Motor neuron (in vitro differentiated cells): ENCODE measurements at regions of chr1 and their contacts with region 1.

Region 1: DNA sequence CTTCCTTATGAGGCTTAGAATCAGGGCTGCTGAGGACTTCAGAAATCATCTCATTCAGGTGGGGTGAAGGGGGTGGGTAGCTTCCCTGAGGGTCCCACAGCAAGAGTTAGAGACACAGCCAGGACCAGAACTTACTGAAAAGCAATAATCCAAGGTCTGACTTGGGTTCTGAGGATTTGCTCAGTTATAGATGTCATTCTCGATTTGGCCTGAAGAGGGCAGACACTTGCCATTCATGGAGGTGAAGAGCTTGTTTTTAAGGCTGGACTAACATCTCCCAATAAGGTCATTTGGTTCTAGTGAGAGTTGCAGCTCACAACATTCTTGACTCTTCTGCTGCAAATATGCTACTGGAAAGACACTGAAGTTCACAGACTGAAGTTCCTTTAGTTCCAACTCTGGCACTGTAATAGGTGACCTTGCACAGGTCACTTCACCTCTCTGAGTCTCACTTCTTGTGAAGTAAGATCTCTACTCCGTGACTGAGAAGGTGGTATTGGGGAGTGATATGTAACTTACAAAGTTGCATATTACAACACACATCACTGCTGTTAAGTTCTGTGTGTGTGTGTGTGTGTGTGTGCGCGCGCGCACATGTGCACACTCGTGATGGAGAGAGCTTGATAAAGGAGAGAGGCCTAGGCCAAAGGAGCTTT is 69.8 kb upstream of the DIRAS3 start:
- ATAC-seq: peak; percentile 74 to 86 (median 78)
- H3K4me3 ChIP-seq: no peak overlapping the region
- H3K27ac ChIP-seq: no peak overlapping the region
- H3K4me1 ChIP-seq: no peaks in the 10 kb centered on the region

Region 2: GRCh38 chr1:66412704-66413103 is 1707.6 kb before region 1 on chr1:
- in situ Hi-C with region 1: no loop called
- ATAC-seq: peak in 1 of 8 experiments; percentile 21
- H3K4me3 ChIP-seq: no peak overlapping the region
- H3K27ac ChIP-seq: no peak overlapping the region
- H3K4me1 ChIP-seq: no peaks in the 10 kb centered on the region

Region 3: GRCh38 chr1:67760030-67760821 is 360.0 kb before region 1 on chr1:
- in situ Hi-C with region 1: loop called in 1 of 9 experiments (anchors 25 kb)
- ATAC-seq: peak; percentile 77 to 96 (median 88)
- H3K4me3 ChIP-seq: no peak overlapping the region
- H3K27ac ChIP-seq: no peak overlapping the region
- H3K4me1 ChIP-seq: peaks cover 11 to 14% of the 10 kb centered on the region in 2 donors

Region 4: GRCh38 chr1:67853704-67854103 is 266.6 kb before region 1 on chr1:
- in situ Hi-C with region 1: loop called in 6 of 9 experiments (anchors 10 to 25 kb)
- ATAC-seq: peak; percentile 74 to 96 (median 82)
- H3K4me3 ChIP-seq: no peak overlapping the region
- H3K27ac ChIP-seq: no peak overlapping the region
- H3K4me1 ChIP-seq: peaks cover 25 to 26% of the 10 kb centered on the region in 2 donors

Region 5: DNA sequence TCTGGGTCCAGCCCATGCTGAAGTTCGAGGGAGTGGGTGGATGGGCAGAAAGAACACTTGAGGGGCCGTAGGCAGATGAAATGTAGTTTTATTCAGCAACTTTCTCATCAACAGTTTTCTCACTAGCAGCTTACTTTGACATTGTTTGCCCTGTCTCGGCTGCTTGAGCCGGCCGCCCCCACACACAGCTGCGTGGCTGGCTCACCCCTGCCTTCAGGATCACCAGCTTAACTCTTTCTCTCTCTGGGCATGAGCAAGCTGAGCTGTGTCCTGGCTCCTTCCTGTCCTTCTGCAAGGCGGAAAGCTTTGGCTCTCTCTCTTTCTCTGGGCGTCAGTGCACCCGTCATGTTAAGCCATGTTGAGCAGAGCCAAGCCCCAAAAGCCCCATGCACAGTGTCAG is 182.6 kb before region 1 on chr1:
- in situ Hi-C with region 1: no loop called
- ATAC-seq: no peak
- H3K4me3 ChIP-seq: no peak overlapping the region
- H3K27ac ChIP-seq: no peak overlapping the region
- H3K4me1 ChIP-seq: peaks cover 8 to 17% of the 10 kb centered on the region in 2 donors

Region 6: DNA sequence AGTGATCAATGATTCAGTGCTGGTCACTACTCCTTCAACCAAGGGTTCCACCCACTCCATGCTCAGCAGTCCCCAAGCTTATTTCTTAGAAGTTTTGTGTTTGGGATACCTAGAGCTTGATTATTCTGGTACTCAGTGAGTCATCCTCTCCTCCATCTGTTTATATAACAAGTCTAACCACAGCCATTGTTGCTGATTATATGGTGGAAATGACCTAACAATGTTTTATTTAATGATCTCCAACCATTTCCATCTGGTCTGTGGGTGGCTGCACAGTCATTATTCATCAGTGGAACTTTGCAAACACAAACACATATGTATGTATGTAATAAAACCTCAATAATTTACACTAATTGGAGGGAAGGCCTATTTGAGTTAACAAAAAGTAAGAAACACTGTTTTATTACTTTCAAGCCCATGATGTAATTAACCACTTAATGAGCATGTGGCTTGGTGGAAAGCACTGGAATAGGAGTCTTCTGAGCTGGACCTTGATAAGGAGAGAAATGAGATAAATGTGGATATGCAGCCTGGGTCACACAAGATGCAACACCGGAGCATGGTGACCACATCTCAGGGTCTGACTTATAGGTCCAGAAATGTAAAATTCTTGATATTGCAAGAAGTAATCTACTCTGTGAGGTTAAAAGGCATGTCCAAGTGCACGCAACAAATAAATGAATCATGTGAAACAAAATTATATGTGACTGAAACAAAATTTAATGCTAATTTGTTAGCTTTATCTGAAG is 211.0 kb after region 1 on chr1:
- in situ Hi-C with region 1: loop called in 6 of 9 experiments (anchors 10 to 25 kb)
- ATAC-seq: peak in 7 of 8 experiments; percentile 36 to 97 (median 57)
- H3K4me3 ChIP-seq: no peak overlapping the region
- H3K27ac ChIP-seq: no peak overlapping the region
- H3K4me1 ChIP-seq: no peaks in the 10 kb centered on the region

Region 7: DNA sequence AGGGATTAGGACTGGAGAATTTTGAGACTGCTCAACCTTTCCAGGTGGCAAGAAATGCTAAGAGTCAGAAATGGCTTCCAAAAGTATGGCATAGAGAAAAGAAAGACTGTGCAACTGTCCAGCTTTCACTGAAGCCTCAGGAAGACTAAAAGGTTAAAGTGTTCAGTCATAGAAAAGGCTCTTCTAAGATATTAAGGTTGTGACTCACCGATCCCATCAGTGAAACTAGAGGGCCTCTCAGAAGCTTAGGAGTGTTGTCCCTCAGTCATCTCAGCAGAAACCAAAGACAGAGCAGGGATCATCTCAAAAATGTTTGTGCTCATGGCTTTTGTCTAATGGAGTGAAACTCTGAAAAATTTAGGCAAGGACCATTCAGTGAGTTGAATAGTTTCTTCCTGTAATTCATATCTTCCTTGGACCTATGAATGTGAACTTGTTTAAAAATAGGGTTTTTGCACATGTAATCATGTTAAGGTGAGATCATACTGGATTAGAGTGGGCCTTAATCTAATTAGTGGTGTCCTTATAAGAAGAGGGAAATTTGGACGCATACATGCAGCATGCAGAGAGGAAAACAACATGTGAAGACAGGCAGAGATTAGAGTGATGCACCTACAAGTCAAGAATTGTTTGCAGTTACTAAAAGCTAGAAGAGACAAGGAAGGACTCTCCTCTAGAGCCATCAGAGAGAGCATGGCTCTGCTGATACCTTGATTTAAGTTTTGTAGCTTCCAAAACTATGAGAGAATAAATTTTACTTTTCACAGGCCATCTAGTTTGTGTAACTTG is 258.2 kb after region 1 on chr1:
- in situ Hi-C with region 1: no loop called
- ATAC-seq: peak in 2 of 8 experiments; percentile 22 to 59
- H3K4me3 ChIP-seq: no peak overlapping the region
- H3K27ac ChIP-seq: no peak overlapping the region
- H3K4me1 ChIP-seq: no peaks in the 10 kb centered on the region

Region 8: GRCh38 chr1:68442822-68443556 is 322.7 kb after region 1 on chr1:
- in situ Hi-C with region 1: loop called in 1 of 9 experiments (anchors 25 kb)
- ATAC-seq: peak in 4 of 8 experiments; percentile 61 to 94 (median 88)
- H3K4me3 ChIP-seq: no peak overlapping the region
- H3K27ac ChIP-seq: no peak overlapping the region
- H3K4me1 ChIP-seq: no peaks in the 10 kb centered on the region